ENCODE measurements at regions of chr11 and their contacts with region 1.

Region 1: DNA sequence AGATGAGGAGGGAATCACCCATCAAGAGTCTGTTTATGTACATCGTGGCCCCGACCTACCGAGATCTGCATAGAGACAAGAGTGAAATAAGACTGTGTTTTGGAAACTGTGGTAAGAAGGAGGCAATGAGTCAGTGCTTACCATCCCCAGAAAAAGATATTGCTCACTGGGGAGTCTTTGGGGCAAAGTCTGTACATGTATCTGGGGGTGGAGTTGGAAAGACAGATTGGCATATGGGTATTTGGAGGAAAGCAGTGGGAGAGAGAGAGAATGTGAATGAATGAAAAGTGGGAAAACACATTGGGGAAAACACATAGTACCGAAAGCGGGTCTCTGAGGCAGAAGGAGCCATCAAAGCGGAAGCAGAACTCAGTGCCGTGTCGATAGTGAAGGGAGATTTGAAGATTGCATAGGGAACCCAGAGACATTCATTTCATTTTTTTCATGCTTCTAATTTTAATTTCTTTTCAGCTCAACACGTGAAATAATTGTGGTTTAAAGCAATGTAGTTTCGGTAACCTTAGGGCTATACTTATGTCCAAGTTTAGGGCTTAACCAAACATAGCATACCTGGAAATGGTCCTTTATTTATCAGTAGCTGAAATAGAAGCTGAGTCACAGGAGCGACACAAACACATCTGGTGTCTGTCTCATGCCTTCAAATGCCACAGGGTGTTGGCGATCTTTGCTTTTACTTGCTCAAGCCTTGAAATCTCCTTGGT is 98.6 kb upstream of the CD44 start:
- DNase-seq: peak; percentile 99
- H3K4me3 ChIP-seq: peak overlapping the region; percentile 4 to 40 (median 32)
- H3K27ac ChIP-seq: peak overlapping the region; percentile 97
- H3K4me1 ChIP-seq: peaks cover 64% of the 10 kb centered on the region
- H3K27me3 ChIP-seq: no peaks in the 10 kb centered on the region
- CTCF ChIP-seq: no peak

Region 2: GRCh38 chr11:34977089-34977906 is 63.1 kb before region 1 on chr11:
- CTCF ChIA-PET with region 1: no interaction called
- dilution Hi-C with region 1: no loop called
- in situ Hi-C with region 1: no loop called
- intact Hi-C with region 1: no loop called
- DNase-seq: peak; percentile 75
- H3K4me3 ChIP-seq: peak overlapping the region in 2 of 3 experiments; percentile 28 to 36
- H3K27ac ChIP-seq: peak overlapping the region; percentile 78
- H3K4me1 ChIP-seq: peaks cover 35% of the 10 kb centered on the region
- H3K27me3 ChIP-seq: no peaks in the 10 kb centered on the region
- CTCF ChIP-seq: no peak

Region 3: DNA sequence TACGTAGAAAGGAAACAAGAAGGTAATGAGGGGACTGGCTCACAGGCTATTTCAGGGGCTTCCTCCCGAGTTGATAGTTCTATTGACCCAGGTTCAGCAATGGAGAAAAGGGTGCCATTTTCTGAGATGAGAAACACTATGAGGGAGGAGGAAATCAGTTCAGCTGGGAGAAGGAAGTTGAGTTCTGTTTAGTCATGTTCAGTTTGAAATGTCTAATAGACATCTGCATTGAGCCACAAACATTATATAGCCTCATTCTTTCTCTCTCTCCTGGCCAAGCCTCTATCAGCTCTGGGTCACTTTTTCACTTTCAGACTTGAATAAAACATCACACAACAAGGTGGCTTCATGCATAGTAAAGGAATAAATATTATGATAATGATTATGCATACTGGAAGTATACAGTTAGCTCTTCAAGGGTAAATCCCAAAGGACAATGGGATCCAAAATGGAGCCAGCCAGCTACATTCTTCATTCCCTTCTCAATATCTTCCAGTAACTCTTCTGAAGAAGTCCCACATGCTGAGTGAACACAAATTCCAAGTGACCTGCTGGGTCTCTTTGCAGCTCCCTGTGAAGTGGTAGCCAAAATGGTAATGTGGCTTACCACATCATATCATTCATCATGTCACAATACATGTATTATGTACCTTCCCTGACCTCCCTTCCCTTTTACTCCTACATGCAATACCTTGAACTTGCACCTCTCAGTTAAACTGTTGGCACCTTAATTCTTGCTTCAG is 17.7 kb after region 1 on chr11:
- CTCF ChIA-PET with region 1: no interaction called
- dilution Hi-C with region 1: no loop called
- in situ Hi-C with region 1: no loop called
- intact Hi-C with region 1: loop called (anchors 1 kb)
- DNase-seq: no peak
- H3K4me3 ChIP-seq: no peak overlapping the region
- H3K27ac ChIP-seq: peak overlapping the region; percentile 90
- H3K4me1 ChIP-seq: peaks cover 24% of the 10 kb centered on the region
- H3K27me3 ChIP-seq: no peaks in the 10 kb centered on the region
- CTCF ChIP-seq: no peak

Region 4: DNA sequence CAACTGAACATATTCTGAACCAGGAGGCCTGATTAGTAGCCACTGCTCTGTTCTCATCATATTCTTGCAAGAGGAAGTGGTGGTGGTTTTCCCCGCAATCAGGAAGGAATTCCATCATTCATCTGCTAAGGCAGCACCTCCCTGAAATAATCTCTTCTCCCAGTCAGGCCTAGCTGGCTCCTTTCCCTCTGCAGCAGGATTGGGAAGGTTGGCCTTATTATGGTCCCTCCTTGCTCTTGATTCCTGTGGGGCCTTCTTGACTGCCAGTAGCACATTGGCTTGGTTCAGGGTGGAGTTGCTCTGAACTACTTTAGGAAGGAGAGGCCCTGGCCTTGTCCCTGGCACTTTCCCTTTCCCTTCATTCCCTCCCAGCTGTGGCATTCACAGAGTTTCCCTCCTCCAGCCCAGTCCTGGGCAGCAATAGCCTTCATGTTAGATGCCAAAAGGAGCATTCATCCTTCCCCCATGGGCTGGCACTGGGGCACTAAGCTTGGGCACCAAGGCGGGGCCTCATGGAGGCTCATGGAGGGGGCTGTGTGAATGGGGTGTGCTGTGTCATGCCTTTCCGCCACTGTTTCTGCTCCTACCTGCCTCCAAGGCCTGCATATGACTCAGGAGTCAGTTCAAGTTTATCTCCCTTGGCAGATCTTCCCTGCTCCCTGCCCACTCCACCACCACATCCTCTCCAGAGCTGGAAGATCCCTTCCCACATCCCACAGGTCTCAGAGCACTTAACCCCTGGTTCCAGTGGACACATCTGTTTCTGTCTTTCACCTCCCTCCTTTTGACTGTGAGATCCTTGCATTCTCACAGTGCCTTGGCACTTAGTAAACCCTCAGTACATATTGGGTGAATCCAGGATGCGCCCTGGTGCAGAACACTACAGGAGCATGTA is 71.0 kb after region 1 on chr11:
- CTCF ChIA-PET with region 1: no interaction called
- dilution Hi-C with region 1: no loop called
- in situ Hi-C with region 1: no loop called
- intact Hi-C with region 1: loop called (anchors 1 kb)
- DNase-seq: peak; percentile 99
- H3K4me3 ChIP-seq: peak overlapping the region in 1 of 3 experiments; percentile 17
- H3K27ac ChIP-seq: peak overlapping the region; percentile 94
- H3K4me1 ChIP-seq: peaks cover 70% of the 10 kb centered on the region
- H3K27me3 ChIP-seq: no peaks in the 10 kb centered on the region
- CTCF ChIP-seq: no peak

Region 5: GRCh38 chr11:35138943-35139721 is 98.8 kb after region 1 on chr11 and contains the start of gene CD44:
- CTCF ChIA-PET with region 1: no interaction called
- dilution Hi-C with region 1: no loop called
- in situ Hi-C with region 1: loop called in 1 of 2 experiments (anchors 5 kb)
- intact Hi-C with region 1: loop called (anchors 1 kb)
- DNase-seq: peak; percentile 89
- H3K4me3 ChIP-seq: peak within 1 kb of the TSS; percentile 85 to 98 (median 88)
- H3K27ac ChIP-seq: peak within 1 kb of the TSS; percentile 95
- H3K4me1 ChIP-seq: peaks cover 29% of the 10 kb centered on the region
- H3K27me3 ChIP-seq: no peaks in the 10 kb centered on the region
- CTCF ChIP-seq: no peak
- total RNA-seq, gene CD44: 1,362 to 2,544 TPM

Region 6: GRCh38 chr11:35165423-35166368 is 125.3 kb after region 1 on chr11:
- CTCF ChIA-PET with region 1: no interaction called
- dilution Hi-C with region 1: no loop called
- in situ Hi-C with region 1: no loop called
- intact Hi-C with region 1: loop called (anchors 1 kb)
- DNase-seq: peak; percentile 71
- H3K4me3 ChIP-seq: peak overlapping the region in 1 of 3 experiments; percentile 5
- H3K27ac ChIP-seq: peak overlapping the region; percentile 96
- H3K4me1 ChIP-seq: peaks cover 88% of the 10 kb centered on the region
- H3K27me3 ChIP-seq: no peaks in the 10 kb centered on the region
- CTCF ChIP-seq: no peak

Region 7: DNA sequence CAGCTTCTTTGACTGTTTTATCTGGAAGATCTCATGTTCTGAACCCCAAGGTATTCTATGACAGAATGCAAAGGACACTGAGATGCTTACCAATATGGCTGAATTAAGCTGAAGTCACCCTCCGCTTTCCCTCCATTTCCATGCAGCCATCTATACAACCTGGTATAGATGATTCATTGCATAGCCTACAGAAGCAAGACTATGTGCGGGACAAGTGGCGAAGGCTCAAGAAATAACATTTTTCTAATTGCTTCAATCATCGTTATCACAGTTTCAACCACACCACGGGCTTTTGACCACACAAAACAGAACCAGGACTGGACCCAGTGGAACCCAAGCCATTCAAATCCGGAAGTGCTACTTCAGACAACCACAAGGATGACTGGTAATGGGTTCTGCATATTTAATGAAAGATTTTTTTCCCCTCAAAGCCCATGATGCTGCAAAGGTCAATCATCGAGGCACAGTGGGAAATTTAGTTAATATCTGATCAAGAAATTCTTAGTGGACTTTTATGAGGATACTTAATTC is 160.5 kb after region 1 on chr11:
- CTCF ChIA-PET with region 1: no interaction called
- dilution Hi-C with region 1: no loop called
- in situ Hi-C with region 1: no loop called
- intact Hi-C with region 1: no loop called
- DNase-seq: no peak
- H3K4me3 ChIP-seq: no peak overlapping the region
- H3K27ac ChIP-seq: no peak overlapping the region
- H3K4me1 ChIP-seq: no peaks in the 10 kb centered on the region
- H3K27me3 ChIP-seq: no peaks in the 10 kb centered on the region
- CTCF ChIP-seq: no peak

Measured in mammary epithelial cell (primary cell).